PC-3 (cell line): ENCODE measurements at regions of chr3 and their contacts with region 1.

Region 1: DNA sequence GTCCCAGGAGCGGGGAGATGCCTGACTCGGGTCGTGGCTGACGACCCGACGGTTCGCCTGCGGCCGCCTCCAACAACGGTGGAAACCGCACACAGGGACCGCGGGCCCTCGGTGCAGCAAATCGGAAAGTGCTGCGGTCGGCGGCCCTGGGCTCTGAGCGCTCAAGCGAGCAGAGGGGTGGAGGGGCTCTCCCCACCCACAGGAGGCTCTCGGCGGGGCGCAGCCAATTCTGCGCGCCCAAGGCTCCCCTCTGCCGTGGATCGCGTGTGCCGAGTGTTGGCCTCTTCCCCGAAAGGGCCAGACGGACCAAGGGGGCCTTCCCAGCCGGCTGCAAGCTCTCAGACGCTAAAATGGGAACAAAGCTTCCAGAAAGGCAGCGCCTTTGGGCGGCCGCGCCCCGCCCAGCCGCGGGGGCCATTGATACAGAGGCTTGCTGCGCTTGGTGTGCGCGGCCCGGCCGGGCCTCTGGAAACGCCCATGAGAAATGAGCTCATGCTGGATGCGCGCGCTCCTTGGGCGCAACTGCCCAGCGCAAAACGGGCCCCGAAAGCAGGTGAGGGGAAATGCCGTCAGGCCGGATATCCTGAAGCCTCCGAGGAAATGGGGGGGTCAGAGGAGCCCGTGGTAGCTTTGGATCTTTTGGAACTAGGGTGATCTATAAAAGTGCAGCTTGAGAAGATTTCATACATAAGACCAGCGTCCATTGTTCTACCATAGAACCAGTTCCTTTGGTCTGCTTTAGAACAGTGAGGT is 1.2 kb upstream of the GSK3B start:
- DNase-seq: peak; percentile 98
- ATAC-seq: peak; percentile 58
- H3K4me3 ChIP-seq: peak overlapping the region; percentile 95
- H3K27ac ChIP-seq: peak overlapping the region; percentile 95
- H3K4me1 ChIP-seq: peaks cover 16% of the 10 kb centered on the region
- H3K27me3 ChIP-seq: no peaks in the 10 kb centered on the region
- CTCF ChIP-seq: no peak

Region 2: DNA sequence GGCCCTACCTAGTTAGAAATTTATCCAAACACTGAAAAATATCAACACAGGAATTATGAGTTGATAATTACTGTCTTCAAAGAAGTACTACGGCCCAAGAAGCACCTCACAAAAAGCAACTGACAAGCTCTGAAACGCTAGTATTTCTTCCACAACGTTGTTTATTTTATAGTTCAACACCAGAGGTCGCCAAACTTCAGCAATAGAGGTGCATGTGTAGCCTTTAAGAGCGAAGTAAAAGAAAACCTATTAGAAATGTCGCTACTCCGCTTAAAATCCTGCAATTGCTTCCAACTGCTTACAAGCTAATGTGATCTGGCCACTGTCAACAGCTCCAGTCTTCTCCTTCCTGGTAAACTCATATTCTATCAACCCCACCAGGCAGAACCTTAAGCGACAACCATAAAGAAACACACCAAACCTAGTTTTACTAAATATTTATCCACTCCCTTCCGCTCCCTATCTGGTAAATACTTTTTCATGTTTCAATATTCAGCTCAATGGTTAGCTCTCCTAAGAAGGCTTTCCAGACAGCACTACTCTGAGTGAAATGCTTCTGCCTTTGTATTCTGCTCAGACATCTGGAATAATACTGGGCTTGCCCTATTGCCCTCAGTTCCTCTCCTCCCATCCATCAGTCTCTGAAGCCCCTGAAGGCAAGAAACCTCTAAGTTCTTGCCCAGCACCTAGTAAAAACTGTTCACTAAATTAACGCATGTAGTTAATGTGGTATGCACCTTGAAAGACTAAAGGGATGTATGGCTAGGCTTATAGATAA is 203.3 kb before region 1 on chr3:
- CTCF ChIA-PET with region 1: interaction called, 3 read pairs
- POLR2A ChIA-PET with region 1: no interaction called
- intact Hi-C with region 1: loop called (anchors 1 kb)
- DNase-seq: peak; percentile 83
- ATAC-seq: peak; percentile 84
- H3K4me3 ChIP-seq: no peak overlapping the region
- H3K27ac ChIP-seq: no peak overlapping the region
- H3K4me1 ChIP-seq: no peaks in the 10 kb centered on the region
- H3K27me3 ChIP-seq: no peaks in the 10 kb centered on the region
- CTCF ChIP-seq: peak; percentile 95

Region 3: DNA sequence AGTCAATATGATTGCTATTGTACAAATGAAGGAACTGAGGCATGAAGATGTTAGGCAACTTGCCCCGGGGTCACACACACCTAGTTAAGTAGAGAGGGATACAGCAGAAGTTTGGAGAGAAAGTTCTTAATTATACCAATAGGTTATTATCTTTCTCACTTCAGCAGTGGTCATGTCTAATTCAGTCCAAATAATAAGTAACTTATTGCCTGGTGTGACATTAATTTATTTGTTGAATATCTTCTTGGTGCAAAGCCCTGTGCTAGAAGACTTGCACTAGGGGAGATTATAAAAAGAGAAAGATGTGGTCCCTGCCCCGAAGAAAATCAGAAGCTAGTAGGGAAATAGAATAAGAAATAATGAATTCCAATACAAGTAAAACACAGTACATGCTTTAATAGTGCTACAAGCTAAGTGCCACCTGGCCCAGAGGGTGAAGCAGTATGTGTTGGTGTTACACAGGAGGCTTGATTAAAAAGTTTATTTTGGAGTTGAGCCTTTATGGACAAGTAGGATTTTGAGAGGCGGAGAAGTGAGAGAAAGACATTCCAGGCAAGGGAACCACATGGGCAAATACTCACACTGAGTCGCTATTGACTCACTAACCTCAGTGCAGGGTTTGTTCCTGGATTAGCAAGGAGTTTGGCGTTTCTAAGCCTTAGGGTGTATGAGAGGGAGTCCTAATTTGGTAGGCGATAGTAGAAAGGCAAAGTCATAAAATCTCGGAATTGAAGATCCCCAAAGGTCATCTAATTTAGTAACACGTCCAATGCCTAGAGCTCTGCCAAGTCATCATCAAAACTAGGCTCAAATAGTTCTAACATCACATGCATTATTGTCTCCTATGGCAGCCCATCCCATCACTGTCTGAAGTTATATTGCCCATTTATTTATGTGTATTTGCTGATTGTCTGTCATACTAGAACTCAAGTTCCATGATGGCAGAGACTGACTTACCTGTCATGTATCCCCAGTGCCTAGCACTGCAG is 18.0 kb after region 1 on chr3:
- CTCF ChIA-PET with region 1: no interaction called
- POLR2A ChIA-PET with region 1: interaction called, 17 read pairs
- intact Hi-C with region 1: loop called (anchors 1 kb)
- DNase-seq: peak; percentile 98
- ATAC-seq: peak; percentile 99
- H3K4me3 ChIP-seq: no peak overlapping the region
- H3K27ac ChIP-seq: peak overlapping the region; percentile 80
- H3K4me1 ChIP-seq: peaks cover 33% of the 10 kb centered on the region
- H3K27me3 ChIP-seq: no peaks in the 10 kb centered on the region
- CTCF ChIP-seq: no peak

Region 4: DNA sequence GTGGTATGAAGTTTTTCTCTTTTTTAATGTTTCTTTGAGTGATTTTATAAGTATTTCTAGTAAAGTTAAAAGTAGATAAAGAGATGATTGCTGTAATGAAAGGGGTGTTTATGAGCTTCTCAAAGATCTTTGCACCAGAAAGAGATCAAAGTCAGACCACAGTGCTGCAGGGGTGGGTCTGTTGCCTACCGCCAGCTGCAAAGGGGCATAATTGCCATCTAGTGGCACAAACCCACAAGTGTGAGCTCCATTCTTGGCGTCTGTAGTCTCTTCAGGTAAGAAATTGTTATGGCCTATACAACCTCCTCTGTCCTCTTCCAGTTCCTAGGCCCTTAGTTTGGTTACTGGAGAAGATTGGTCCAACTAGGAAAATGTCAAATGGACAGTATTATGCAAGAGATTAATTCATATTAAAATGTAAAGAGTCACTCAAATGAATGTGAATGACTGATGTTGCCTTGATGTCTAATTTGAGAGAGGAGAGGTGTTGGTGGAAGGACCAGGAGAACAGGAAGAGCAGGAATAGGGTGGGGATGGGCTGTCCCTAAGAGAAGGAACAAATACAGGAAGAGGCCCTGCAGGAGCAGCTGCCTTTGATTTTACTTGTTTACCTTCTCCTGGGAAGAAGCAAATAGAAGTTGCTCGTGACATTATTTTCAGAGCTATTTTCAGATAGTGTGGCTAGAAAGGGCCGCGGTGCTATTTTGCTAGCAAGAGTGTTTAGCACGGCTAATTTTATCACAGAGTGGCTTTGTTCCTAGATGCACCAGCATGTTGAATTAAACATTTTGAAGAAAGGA is 51.9 kb after region 1 on chr3:
- CTCF ChIA-PET with region 1: interaction called, 6 read pairs
- POLR2A ChIA-PET with region 1: interaction called, 34 read pairs
- intact Hi-C with region 1: loop called (anchors 2 kb)
- DNase-seq: peak; percentile 85
- ATAC-seq: peak; percentile 58
- H3K4me3 ChIP-seq: peak overlapping the region; percentile 22; the same call in 1 of the 2 replicates
- H3K27ac ChIP-seq: peak overlapping the region; percentile 52
- H3K4me1 ChIP-seq: peaks cover 55% of the 10 kb centered on the region
- H3K27me3 ChIP-seq: no peaks in the 10 kb centered on the region
- CTCF ChIP-seq: peak; percentile 54; the same call in 1 of the 2 replicates

Region 5: GRCh38 chr3:120170223-120170622 is 74.8 kb after region 1 on chr3:
- CTCF ChIA-PET with region 1: no interaction called
- POLR2A ChIA-PET with region 1: interaction called, 14 read pairs
- intact Hi-C with region 1: loop called (anchors 2 kb)
- DNase-seq: peak; percentile 98
- ATAC-seq: peak; percentile 99
- H3K4me3 ChIP-seq: 0 out of 2 replicates have a peak overlapping the region, but pooled peaks have one; percentile 8
- H3K27ac ChIP-seq: peak overlapping the region; percentile 71
- H3K4me1 ChIP-seq: peaks cover 31% of the 10 kb centered on the region
- H3K27me3 ChIP-seq: no peaks in the 10 kb centered on the region
- CTCF ChIP-seq: no peak

Region 6: GRCh38 chr3:120198305-120198878 is 103.0 kb after region 1 on chr3:
- CTCF ChIA-PET with region 1: no interaction called
- POLR2A ChIA-PET with region 1: interaction called, 6 read pairs
- intact Hi-C with region 1: loop called (anchors 1 kb)
- DNase-seq: peak; percentile 81
- ATAC-seq: peak; percentile 81
- H3K4me3 ChIP-seq: no peak overlapping the region
- H3K27ac ChIP-seq: no peak overlapping the region
- H3K4me1 ChIP-seq: peaks cover 25% of the 10 kb centered on the region
- H3K27me3 ChIP-seq: no peaks in the 10 kb centered on the region
- CTCF ChIP-seq: peak; percentile 90